BJ (cell line): ENCODE measurements at regions of chr2 and their contacts with region 1.

Region 1: DNA sequence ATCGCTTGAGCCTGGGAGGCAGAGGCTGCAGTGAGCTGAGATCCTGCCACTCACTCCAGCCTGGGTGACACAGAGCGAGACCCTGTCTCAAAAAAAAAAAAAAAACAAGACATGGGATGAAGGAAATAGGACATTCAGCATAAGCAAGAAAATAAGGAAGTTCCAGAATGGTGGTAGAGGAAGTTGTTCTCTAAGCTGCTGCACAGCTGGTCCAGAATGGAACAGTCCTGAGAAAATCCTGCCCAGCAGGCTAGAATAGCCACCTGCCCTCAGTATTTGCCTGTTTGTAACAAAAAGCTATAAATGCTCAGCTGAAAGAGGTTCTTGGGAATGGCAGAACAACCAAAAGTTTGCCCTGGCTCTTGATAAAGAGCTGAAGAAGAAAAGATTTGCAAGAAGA is 11.1 kb upstream of the MAPRE3 start:
- DNase-seq: no peak
- H3K4me3 ChIP-seq: no peak overlapping the region
- H3K27me3 ChIP-seq: peaks cover 20% of the 10 kb centered on the region
- CTCF ChIP-seq: no peak

Region 2: DNA sequence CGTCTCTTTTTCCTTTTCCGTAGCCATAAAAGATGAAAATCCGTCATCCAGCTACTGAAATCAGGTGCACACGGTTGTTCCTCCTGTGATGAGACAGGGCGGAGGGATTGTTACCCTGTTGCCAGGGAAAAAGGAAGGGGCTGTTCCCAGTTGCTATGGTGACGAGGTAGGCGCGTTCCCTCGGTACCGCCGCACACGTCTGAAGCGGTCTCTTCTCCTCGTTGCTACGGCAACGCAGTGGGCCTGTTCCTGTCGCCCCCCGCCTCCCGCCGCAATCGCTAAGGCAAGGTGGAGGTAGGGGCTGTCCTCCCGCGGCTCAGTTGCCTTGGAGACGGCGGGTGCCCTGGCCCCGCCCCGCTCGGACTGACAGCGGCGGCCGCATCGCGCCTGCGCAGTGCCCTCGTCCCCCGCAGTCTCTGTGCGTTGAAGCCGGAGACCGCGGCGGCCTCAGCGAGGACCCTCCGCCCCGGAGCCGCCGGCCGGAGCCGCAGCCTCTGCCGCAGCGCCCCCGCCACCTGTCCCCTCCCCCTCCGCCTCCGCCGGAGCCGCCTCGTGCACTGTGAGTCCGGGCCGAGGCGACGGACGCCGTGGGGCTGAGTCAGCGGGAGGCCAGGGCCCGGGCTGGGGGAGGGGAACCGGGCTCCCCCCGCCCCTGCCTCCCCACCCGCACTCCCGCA is 11.1 kb after region 1 on chr2 and contains the start of gene MAPRE3:
- CTCF ChIA-PET with region 1: interaction called, 22 read pairs
- POLR2A ChIA-PET with region 1: no interaction called
- DNase-seq: no peak
- H3K4me3 ChIP-seq: peak within 1 kb of the TSS; percentile 64
- H3K27me3 ChIP-seq: peaks cover 6% of the 10 kb centered on the region
- CTCF ChIP-seq: no peak
- polyA plus RNA-seq, gene MAPRE3: 12.0 and 15.3 TPM in 2 replicates

Region 3: GRCh38 chr2:26982102-26982742 is 22.9 kb after region 1 on chr2:
- CTCF ChIA-PET with region 1: interaction called, 22 read pairs
- POLR2A ChIA-PET with region 1: no interaction called
- DNase-seq: no peak
- H3K4me3 ChIP-seq: no peak overlapping the region
- H3K27me3 ChIP-seq: no peaks in the 10 kb centered on the region
- CTCF ChIP-seq: no peak

Region 4: GRCh38 chr2:27016801-27017325 is 57.5 kb after region 1 on chr2:
- CTCF ChIA-PET with region 1: interaction called, 263 read pairs
- POLR2A ChIA-PET with region 1: no interaction called
- DNase-seq: no peak
- H3K4me3 ChIP-seq: no peak overlapping the region
- H3K27me3 ChIP-seq: no peaks in the 10 kb centered on the region
- CTCF ChIP-seq: peak; percentile 73

Region 5: DNA sequence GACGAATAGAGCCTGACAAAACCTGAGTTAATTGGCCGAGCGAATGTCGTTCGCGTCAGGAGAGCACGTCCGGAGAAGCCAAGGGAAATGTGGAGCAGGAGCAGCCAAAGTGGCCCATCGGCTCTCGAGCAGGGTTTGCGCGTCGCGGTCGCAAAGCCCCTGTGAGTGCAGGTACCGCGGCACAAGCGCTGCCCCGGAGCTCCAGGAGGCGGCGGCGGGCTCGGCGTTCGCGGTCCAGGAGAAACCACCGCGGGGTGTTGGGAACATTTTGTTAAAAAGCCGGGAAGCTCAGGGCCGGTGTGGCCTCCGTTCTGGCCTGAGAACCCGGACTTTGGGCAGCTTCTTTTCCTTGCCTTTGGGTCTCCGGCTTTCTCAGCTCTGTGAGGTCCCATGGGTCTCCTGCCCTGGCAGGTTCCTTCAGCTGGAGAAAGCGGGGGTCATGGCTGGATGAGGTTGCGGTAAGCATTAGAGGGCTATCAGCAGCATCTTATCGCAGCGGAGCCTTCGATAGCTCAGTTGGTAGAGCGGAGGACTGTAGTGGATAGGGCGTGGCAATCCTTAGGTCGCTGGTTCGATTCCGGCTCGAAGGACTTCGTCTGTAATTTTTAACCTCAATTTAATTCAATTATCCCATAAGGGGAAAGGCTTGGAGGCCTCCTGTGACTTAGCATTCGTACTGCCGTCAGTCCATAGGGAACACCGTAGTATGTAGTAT is 91.1 kb after region 1 on chr2:
- CTCF ChIA-PET with region 1: interaction called, 12 read pairs
- POLR2A ChIA-PET with region 1: interaction called, 4 read pairs
- DNase-seq: no peak
- H3K4me3 ChIP-seq: peak overlapping the region; percentile 66
- H3K27me3 ChIP-seq: no peaks in the 10 kb centered on the region
- CTCF ChIP-seq: peak; percentile 53; the same call in 1 of the 2 replicates

Region 6: GRCh38 chr2:27086090-27086723 is 126.9 kb after region 1 on chr2:
- CTCF ChIA-PET with region 1: interaction called, 30 read pairs
- POLR2A ChIA-PET with region 1: no interaction called
- DNase-seq: peak; percentile 49
- H3K4me3 ChIP-seq: peak overlapping the region; percentile 49
- H3K27me3 ChIP-seq: no peaks in the 10 kb centered on the region
- CTCF ChIP-seq: peak; percentile 51

Region 7: GRCh38 chr2:27271631-27272340 is 312.5 kb after region 1 on chr2:
- CTCF ChIA-PET with region 1: no interaction called
- POLR2A ChIA-PET with region 1: no interaction called
- DNase-seq: no peak
- H3K4me3 ChIP-seq: no peak overlapping the region
- H3K27me3 ChIP-seq: peaks cover 17% of the 10 kb centered on the region
- CTCF ChIP-seq: no peak